A549 (cell line): ENCODE measurements at regions of chr16 and their contacts with region 1.

Region 1: DNA sequence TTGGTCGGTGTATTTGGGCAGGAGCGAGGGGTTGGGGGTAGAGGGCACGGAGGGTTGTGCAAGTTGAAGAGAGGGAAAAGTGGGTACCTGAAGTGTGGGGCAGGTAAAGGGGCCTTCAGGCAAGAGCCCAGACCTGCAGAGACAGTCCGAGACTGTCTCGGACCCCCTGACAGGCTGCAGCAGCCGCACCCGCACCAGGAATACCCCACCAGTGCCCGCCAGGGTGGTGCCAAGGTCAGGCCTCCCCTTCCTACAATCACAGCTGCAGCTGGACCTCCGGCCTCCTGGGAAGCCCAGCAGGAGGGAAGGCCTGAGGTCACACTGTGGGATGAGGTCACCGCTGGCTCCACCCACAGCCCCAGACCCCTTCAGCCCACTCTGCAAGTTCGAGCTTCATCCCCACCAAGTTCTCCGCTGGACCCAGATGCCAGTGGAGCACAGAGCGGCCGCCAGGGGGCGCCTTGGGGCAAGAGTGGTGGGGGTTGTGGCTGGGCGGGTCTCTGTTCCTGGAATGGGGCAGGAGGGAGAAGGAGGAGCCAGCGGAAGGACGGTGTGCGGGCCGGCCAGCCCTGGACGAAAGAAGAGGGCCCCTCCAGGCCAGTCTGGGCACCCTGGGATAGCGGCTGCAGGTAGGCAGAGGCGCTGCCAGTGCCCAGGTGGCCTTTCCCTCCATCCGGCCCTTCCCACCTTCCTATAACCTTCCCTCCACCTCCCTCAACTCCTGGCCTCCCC is at the start of gene HSD3B7:
- DNase-seq: peak; percentile 80 to 95
- ATAC-seq: peak; percentile 75 to 92
- H3K4me3 ChIP-seq: peak within 1 kb of the TSS; percentile 46
- H3K27ac ChIP-seq: peak within 1 kb of the TSS; percentile 84 to 88
- H3K4me1 ChIP-seq: peaks cover 13% of the 10 kb centered on the region
- CTCF ChIP-seq: peak; percentile 86
- EP300 ChIP-seq: no peak
- POLR2A ChIP-seq: peak; percentile 21; the same call in 1 of the 2 replicates
- RAD21 ChIP-seq: peak; percentile 86 to 90
- polyA plus RNA-seq, gene HSD3B7: 10.5 and 15.2 TPM in 2 replicates

Region 2: GRCh38 chr16:30956601-30957455 is 28.0 kb before region 1 on chr16:
- CTCF ChIA-PET with region 1: interaction called, 17 read pairs
- POLR2A ChIA-PET with region 1: no interaction called
- DNase-seq: peak; percentile 79 to 91
- ATAC-seq: peak; percentile 65 to 80
- H3K4me3 ChIP-seq: peak overlapping the region; percentile 77
- H3K27ac ChIP-seq: peak overlapping the region; percentile 98 to 100
- H3K4me1 ChIP-seq: peaks cover 22% of the 10 kb centered on the region
- CTCF ChIP-seq: 0 out of 3 replicates have a peak, but pooled peaks have one; percentile 25
- EP300 ChIP-seq: no peak
- POLR2A ChIP-seq: no peak; the same call in none of the 2 replicates
- RAD21 ChIP-seq: no peak

Region 3: GRCh38 chr16:31002250-31002700 is 17.4 kb after region 1 on chr16:
- CTCF ChIA-PET with region 1: interaction called, 25 read pairs
- POLR2A ChIA-PET with region 1: interaction called, 9 read pairs
- DNase-seq: no peak
- ATAC-seq: no peak
- H3K4me3 ChIP-seq: no peak overlapping the region
- H3K27ac ChIP-seq: peak overlapping the region in 1 of 2 experiments; percentile 24; a peak in 1 of 6 replicates
- H3K4me1 ChIP-seq: peaks cover 26% of the 10 kb centered on the region
- CTCF ChIP-seq: no peak
- EP300 ChIP-seq: no peak
- POLR2A ChIP-seq: no peak
- RAD21 ChIP-seq: no peak

Region 4: DNA sequence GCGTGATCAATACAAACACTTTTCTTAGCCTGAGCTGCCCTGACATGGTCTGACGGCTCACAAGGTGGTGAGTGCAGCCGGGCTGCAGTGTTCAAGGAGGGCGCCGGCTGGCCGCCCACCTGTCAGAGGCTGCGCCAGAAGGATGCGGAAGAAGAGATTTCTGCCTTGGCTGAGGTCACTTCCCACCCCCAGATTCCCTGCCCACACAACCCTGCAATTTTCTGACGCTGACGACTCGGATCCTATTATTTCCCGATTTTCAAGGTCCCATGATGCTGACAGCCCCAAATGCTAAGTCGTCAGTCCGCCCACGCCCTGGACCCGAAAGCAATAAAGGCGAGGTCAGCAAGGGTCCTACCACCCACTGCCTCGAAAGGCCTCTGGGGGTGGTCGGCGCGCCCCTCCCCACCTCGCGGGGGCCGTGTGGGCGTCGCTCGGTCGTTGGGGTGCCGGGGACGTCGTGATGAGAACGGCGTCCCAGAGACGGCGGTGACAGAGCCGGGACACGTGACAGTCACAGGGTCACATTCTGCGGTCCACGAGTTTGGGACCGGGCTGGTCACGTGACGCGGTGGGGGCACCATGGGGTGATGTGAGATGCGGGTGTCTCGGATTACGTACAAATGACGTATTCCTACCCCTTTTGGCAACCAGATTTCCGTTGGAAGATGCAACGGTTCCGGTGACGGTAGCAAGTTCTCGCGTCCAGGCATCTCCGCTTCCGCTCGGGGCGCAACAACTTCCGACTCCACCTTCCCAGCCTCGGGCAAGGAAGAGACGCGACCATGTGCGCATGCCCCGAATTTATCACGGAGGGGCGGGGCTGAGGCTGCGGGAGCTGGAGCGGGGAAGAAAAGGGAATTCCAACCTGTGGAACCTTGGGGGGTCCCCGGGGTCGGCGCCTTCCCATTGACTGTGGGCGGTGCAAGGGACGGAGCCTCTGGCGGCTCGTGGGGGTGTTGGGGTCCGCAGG is 48.2 kb after region 1 on chr16 and contains the start of gene STX4:
- CTCF ChIA-PET with region 1: interaction called, 49 read pairs
- POLR2A ChIA-PET with region 1: no interaction called
- DNase-seq: peak; percentile 91 to 97
- ATAC-seq: peak; percentile 89 to 90
- H3K4me3 ChIP-seq: peak within 1 kb of the TSS; percentile 72
- H3K27ac ChIP-seq: peak within 1 kb of the TSS; percentile 85 to 95
- H3K4me1 ChIP-seq: peaks cover 8% of the 10 kb centered on the region; the same call in 1 of the 3 replicates
- CTCF ChIP-seq: no peak
- EP300 ChIP-seq: no peak
- POLR2A ChIP-seq: no peak; the same call in 1 of the 2 replicates
- RAD21 ChIP-seq: no peak
- polyA plus RNA-seq, gene STX4: 37.0 and 39.7 TPM in 2 replicates

Region 5: GRCh38 chr16:31064882-31065461 is 80.1 kb after region 1 on chr16:
- CTCF ChIA-PET with region 1: interaction called, 58 read pairs
- POLR2A ChIA-PET with region 1: no interaction called
- DNase-seq: peak; percentile 55 to 74
- ATAC-seq: peak; percentile 84 to 86
- H3K4me3 ChIP-seq: no peak overlapping the region
- H3K27ac ChIP-seq: peak overlapping the region; percentile 70 to 75
- H3K4me1 ChIP-seq: peaks cover 13% of the 10 kb centered on the region
- CTCF ChIP-seq: no peak
- EP300 ChIP-seq: no peak
- POLR2A ChIP-seq: no peak
- RAD21 ChIP-seq: no peak

Region 6: GRCh38 chr16:31094424-31095120 is 109.7 kb after region 1 on chr16 and contains the start of gene VKORC1:
- CTCF ChIA-PET with region 1: interaction called, 97 read pairs
- POLR2A ChIA-PET with region 1: interaction called, 7 read pairs
- DNase-seq: peak; percentile 95 to 99
- ATAC-seq: peak; percentile 94 to 98
- H3K4me3 ChIP-seq: peak within 1 kb of the TSS; percentile 83
- H3K27ac ChIP-seq: peak within 1 kb of the TSS; percentile 82 to 89
- H3K4me1 ChIP-seq: peaks cover 11% of the 10 kb centered on the region; the same call in 2 of the 3 replicates
- CTCF ChIP-seq: no peak
- EP300 ChIP-seq: no peak
- POLR2A ChIP-seq: peak; percentile 62
- RAD21 ChIP-seq: no peak
- polyA plus RNA-seq, gene VKORC1: 101 and 136 TPM in 2 replicates

Region 7: DNA sequence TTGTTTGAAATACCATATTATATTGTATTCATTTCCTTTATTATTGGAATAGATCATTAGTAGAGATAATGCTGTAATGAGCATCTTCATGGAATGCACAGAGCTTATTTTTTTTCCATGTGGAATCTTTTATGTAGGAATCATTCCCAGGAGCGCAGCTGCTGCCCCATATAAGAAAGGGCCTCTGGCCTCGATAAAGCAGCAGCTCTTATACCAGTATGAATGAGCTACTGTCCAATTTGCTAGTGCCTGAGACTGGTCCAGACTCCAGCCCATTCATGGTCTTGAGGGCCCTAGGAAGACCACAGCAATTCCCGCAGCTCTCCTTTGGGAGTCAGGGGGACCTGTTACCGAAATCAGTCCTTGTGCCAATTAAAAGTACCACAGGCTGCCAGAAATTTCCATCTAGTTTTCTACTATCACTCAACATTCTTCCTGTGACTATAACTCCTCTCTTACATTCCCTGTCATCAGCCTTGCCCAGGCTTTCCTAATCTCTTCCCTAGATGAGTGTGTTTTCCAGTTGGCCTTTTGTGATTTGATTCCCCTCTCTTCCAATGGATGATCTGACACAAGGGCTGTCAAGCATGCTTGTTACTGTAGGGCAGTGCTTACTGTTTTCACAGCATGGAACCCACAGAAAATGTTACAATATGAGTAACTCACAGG is 455.8 kb after region 1 on chr16:
- CTCF ChIA-PET with region 1: interaction called, 21 read pairs
- POLR2A ChIA-PET with region 1: no interaction called
- DNase-seq: no peak
- ATAC-seq: no peak
- H3K4me3 ChIP-seq: no peak overlapping the region
- H3K27ac ChIP-seq: no peak overlapping the region
- H3K4me1 ChIP-seq: no peaks in the 10 kb centered on the region
- CTCF ChIP-seq: no peak
- EP300 ChIP-seq: no peak
- POLR2A ChIP-seq: no peak
- RAD21 ChIP-seq: no peak